ENCODE measurements at regions of chr14 and their contacts with region 1.

Region 1: DNA sequence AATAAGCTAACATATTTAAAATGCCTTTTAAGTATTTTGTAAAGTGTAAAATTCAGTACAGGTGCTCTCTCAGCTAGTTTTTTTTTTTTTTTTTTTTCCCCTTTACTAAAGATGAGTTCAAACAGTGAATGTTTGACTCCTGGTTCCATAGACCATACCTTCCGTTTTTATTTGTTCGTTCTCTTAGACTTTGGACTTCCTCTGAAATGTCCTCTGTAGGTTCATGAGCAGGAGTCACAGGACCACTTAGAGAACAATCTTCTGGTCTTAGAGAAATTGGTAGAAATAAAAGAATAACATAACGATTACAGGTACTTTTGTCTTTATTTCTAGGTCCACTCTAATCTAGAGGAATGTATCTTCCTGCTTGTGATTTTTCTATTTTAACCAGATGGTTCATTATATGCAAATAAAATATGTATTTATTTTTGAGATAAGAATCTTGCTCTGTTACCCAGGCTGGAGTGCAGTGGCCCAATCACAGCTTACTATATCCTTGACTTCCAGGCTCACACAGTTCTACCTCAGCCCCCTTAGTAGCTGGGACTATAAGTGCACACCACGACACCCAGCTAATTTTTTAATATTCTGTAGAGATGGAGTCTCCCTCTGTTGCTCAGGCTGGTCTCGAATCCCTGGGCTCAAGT is 25.8 kb downstream of the STYX start:
- DNase-seq: peak; percentile 95
- ATAC-seq: peak; percentile 99
- H3K4me3 ChIP-seq: peak overlapping the region in 2 of 3 experiments; percentile 22 to 24; a peak in 2 of 6 replicates
- H3K27ac ChIP-seq: peak overlapping the region; percentile 78
- H3K4me1 ChIP-seq: peaks cover 38% of the 10 kb centered on the region
- H3K27me3 ChIP-seq: no peaks in the 10 kb centered on the region
- CTCF ChIP-seq: no peak
- EP300 ChIP-seq: peak in 1 of 2 experiments; percentile 76; a peak in 2 of 4 replicates
- POLR2A ChIP-seq: no peak
- RAD21 ChIP-seq: no peak

Region 2: GRCh38 chr14:52735921-52736489 is 19.7 kb before region 1 on chr14:
- CTCF ChIA-PET with region 1: no interaction called
- POLR2A ChIA-PET with region 1: interaction called, 19 read pairs
- in situ Hi-C with region 1: no loop called
- intact Hi-C with region 1: no loop called
- DNase-seq: no peak
- ATAC-seq: peak; percentile 31; the same call in 1 of the 3 replicates
- H3K4me3 ChIP-seq: no peak overlapping the region
- H3K27ac ChIP-seq: no peak overlapping the region
- H3K4me1 ChIP-seq: peaks cover 53% of the 10 kb centered on the region
- H3K27me3 ChIP-seq: no peaks in the 10 kb centered on the region
- CTCF ChIP-seq: no peak
- EP300 ChIP-seq: no peak
- POLR2A ChIP-seq: no peak
- RAD21 ChIP-seq: no peak

Region 3: GRCh38 chr14:53528185-53528671 is 772.5 kb after region 1 on chr14:
- CTCF ChIA-PET with region 1: no interaction called
- POLR2A ChIA-PET with region 1: no interaction called
- in situ Hi-C with region 1: no loop called
- intact Hi-C with region 1: no loop called
- DNase-seq: no peak
- ATAC-seq: no peak
- H3K4me3 ChIP-seq: no peak overlapping the region
- H3K27ac ChIP-seq: no peak overlapping the region
- H3K4me1 ChIP-seq: peaks cover 5% of the 10 kb centered on the region; the same call in 1 of the 2 replicates
- H3K27me3 ChIP-seq: no peaks in the 10 kb centered on the region
- CTCF ChIP-seq: no peak
- EP300 ChIP-seq: no peak
- POLR2A ChIP-seq: no peak
- RAD21 ChIP-seq: no peak

Measured in HepG2 (cell line).